ENCODE measurements at regions of chr13 and their contacts with region 1.

Region 1: DNA sequence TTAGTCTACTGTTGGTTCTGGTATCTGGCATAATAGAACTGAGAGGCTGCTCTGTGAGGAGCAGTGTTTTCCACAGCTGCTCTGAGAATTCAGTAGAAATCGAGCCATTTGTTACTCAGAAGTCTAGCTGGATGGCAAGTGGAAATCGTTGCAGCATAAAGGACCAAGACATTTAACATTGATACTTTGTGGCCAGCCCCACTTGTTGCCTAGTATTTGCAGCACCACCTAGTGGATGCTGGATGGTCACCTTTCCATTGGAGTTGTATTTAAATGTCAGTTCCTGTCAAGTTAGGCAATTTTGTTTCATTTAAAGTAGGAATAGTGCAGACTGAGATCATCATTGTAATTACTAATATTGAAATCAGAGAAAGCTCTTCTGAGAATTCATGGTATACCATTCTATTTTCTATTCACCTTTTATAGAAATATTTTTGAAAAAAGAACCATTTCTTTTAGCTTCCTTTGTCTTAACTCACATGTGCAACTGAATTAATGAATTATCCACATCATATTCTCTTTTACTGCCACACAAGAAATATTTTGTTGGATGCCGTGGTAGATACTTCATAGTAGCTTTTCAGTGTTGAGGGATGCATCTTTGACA is 64.6 kb downstream of the PDS5B start:
- DNase-seq: peak; percentile 38
- H3K4me3 ChIP-seq: no peak overlapping the region; a peak in 1 of 4 replicates
- H3K27ac ChIP-seq: peak overlapping the region in 1 of 2 experiments; percentile 34; a peak in 2 of 4 replicates
- H3K4me1 ChIP-seq: peaks cover 7 to 16% of the 10 kb centered on the region in 2 experiments; a peak in 3 of 4 replicates
- H3K27me3 ChIP-seq: no peaks in the 10 kb centered on the region
- CTCF ChIP-seq: peak; percentile 83
- EP300 ChIP-seq: no peak
- RAD21 ChIP-seq: peak; percentile 67

Region 2: GRCh38 chr13:32594157-32594738 is 56.6 kb before region 1 on chr13:
- CTCF ChIA-PET with region 1: interaction called, 10 read pairs
- POLR2A ChIA-PET with region 1: no interaction called
- DNase-seq: no peak
- H3K4me3 ChIP-seq: no peak overlapping the region
- H3K27ac ChIP-seq: no peak overlapping the region
- H3K4me1 ChIP-seq: peaks cover 6 to 11% of the 10 kb centered on the region in 2 experiments; a peak in 3 of 4 replicates
- H3K27me3 ChIP-seq: no peaks in the 10 kb centered on the region
- CTCF ChIP-seq: no peak
- EP300 ChIP-seq: no peak
- RAD21 ChIP-seq: no peak

Region 3: GRCh38 chr13:32669030-32669646 is 18.3 kb after region 1 on chr13:
- CTCF ChIA-PET with region 1: interaction called, 22 read pairs
- POLR2A ChIA-PET with region 1: no interaction called
- DNase-seq: peak; percentile 36
- H3K4me3 ChIP-seq: no peak overlapping the region
- H3K27ac ChIP-seq: no peak overlapping the region
- H3K4me1 ChIP-seq: no peaks in the 10 kb centered on the region
- H3K27me3 ChIP-seq: no peaks in the 10 kb centered on the region
- CTCF ChIP-seq: peak; percentile 88
- EP300 ChIP-seq: no peak
- RAD21 ChIP-seq: peak; percentile 58